ENCODE measurements at regions of chr1 and their contacts with region 1.

Region 1: DNA sequence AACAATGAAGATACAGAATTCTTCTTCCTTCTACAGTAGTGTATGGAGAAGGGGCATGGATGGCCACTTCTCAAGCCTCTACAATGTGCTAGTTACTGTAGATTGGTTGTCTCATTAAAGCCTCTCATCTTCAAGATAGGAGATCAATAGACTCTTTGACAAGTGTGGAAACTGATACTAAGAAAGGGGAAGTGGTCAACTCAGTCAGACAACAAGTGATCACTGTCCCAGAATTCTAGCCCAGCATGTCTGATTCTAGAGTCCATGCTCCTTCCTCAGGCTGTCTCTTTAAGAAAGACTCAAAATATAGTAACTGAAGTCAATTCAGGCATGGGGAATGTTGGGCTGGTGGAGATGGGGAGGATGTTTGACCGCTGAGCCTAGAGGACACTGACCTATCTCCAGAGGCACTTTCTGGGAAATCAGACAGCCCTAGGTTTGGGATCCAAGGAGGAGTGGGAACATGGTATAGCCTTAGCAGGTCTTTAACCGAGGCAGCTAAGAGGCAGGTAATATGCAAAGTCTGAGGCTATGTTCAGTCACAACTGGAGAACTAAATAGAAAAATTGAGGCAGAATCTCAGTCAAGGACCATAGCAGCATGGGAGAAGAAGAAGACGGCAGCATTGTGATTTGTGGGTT is 39.3 kb upstream of the EYA3 start:
- DNase-seq: no peak
- ATAC-seq: no peak
- H3K4me3 ChIP-seq: no peak overlapping the region
- H3K4me3 Mint-ChIP-seq: no peak overlapping the region
- H3K27ac ChIP-seq: no peak overlapping the region
- H3K27ac Mint-ChIP-seq: no peak overlapping the region
- H3K4me1 ChIP-seq: no peaks in the 10 kb centered on the region
- H3K4me1 Mint-ChIP-seq: no peaks in the 10 kb centered on the region
- H3K27me3 ChIP-seq: peaks cover 0 to 4% of the 10 kb centered on the region in 2 experiments
- H3K27me3 Mint-ChIP-seq: peaks cover 6 to 18% of the 10 kb centered on the region in 2 donors

Region 2: GRCh38 chr1:28112388-28113241 is 15.1 kb before region 1 on chr1:
- CTCF ChIA-PET with region 1: no interaction called
- POLR2A ChIA-PET with region 1: interaction called in 1 of 2 experiments, 10 read pairs
- DNase-seq: peak in 2 of 35 experiments; percentile 9 to 27
- ATAC-seq: no peak
- H3K4me3 ChIP-seq: no peak overlapping the region
- H3K4me3 Mint-ChIP-seq: no peak overlapping the region
- H3K27ac ChIP-seq: no peak overlapping the region
- H3K27ac Mint-ChIP-seq: no peak overlapping the region
- H3K4me1 ChIP-seq: peaks cover 0 to 6% of the 10 kb centered on the region in 2 experiments
- H3K4me1 Mint-ChIP-seq: peaks cover 6 to 10% (median 7%) of the 10 kb centered on the region in 3 donors
- H3K27me3 ChIP-seq: peaks cover 0 to 5% of the 10 kb centered on the region in 2 experiments
- H3K27me3 Mint-ChIP-seq: peaks cover 0 to 3% of the 10 kb centered on the region in 2 donors